Dorsolateral prefrontal cortex (tissue), 120 donors: ENCODE measurements at regions of chr3 and their contacts with region 1.

Region 1: GRCh38 chr3:138347960-138348753 is at the start of gene MRAS:
- DNase-seq: peak; percentile 49 to 82 (median 65)
- H3K4me3 ChIP-seq: peak within 1 kb of the TSS; percentile 55 to 95 (median 81)
- H3K27ac ChIP-seq: peak within 1 kb of the TSS; percentile 22 to 97 (median 92)
- H3K27me3 ChIP-seq: no peaks in the 10 kb centered on the region
- CTCF ChIP-seq: peak in 53 of 56 donors; percentile 24 to 76 (median 53)
- total RNA-seq, gene MRAS: 92.4 to 559 (median 198) TPM

Region 2: GRCh38 chr3:138381950-138382688 is 34.0 kb after region 1 on chr3:
- intact Hi-C with region 1: loop called in 1 of 2 experiments (anchors 2 kb)
- DNase-seq: peak in 5 of 10 donors; percentile 53 to 70 (median 62)
- H3K4me3 ChIP-seq: peak overlapping the region in 8 of 59 donors; percentile 1 to 39 (median 12)
- H3K27ac ChIP-seq: peak overlapping the region; percentile 52 to 99 (median 94)
- H3K27me3 ChIP-seq: no peaks in the 10 kb centered on the region
- CTCF ChIP-seq: peak in 1 of 56 donors; percentile 16

Region 3: GRCh38 chr3:138397983-138398382 is 49.8 kb after region 1 on chr3:
- intact Hi-C with region 1: loop called (anchors 5 kb)
- DNase-seq: peak in 1 of 10 donors; percentile 59
- H3K4me3 ChIP-seq: no peak overlapping the region
- H3K27ac ChIP-seq: peak overlapping the region in 7 of 59 donors; percentile 1 to 70 (median 22)
- H3K27me3 ChIP-seq: no peaks in the 10 kb centered on the region
- CTCF ChIP-seq: peak in 52 of 56 donors; percentile 18 to 72 (median 48)

Region 4: DNA sequence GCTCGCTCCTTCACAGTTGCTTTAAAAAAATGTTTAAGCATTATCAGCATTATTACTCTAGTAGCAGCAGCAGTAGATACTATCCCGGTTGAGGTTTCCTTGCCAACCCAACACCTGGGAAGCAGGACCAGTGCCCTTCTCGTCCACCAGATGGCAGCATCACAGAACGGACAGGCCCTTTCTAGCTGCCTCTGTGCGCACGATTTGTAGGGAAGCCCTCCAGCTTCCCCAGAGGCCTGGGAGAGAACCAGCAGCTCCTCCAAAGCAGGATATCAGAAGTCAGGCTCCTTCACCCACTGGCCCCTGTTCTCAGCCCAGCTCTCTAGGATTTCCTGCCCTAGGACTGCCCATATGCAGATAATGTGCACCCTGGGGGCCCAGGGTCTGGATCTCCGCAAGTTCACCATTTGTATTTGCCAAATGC is 69.4 kb after region 1 on chr3:
- intact Hi-C with region 1: loop called in 1 of 2 experiments (anchors 5 kb)
- DNase-seq: peak; percentile 66 to 85 (median 79)
- H3K4me3 ChIP-seq: no peak overlapping the region
- H3K27ac ChIP-seq: no peak overlapping the region
- H3K27me3 ChIP-seq: no peaks in the 10 kb centered on the region
- CTCF ChIP-seq: peak; percentile 72 to 96 (median 89)

Region 5: DNA sequence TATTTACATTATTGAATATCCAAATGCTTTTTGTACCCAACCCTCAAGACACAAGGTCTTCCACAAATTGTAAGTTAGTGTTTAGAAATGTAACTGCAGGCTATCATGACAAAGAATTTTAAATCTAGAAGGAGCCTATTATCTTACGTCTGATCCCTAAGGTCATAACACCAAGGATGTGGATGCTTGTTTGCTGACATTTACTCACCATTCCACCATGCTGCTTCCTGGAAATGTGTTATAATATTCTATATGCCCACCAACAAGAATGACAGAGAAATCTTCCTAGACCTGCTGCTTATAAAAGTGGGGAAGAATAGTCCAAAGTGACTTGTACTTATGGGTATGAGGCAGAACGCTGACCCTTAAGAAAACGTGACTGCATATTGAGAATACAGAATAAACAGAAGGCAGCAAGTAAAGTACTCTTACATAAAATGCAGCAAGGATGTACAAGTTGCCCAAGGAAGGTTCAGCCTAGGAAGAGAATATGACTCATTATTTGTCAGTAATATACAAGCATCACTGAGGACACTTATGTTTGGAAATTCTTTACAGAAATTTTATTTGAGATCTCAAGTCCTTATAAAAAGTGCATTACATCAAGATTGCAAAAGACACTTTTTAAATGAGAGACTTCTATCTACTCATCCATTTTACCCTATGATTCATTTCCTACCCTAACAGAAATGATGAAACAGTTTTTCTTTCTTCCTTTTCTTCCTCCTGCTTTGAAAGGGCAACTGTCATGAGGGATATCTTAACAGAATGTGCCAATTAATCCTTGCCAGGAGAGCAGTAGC is 145.8 kb after region 1 on chr3:
- intact Hi-C with region 1: no loop called
- DNase-seq: no peak
- H3K4me3 ChIP-seq: no peak overlapping the region
- H3K27ac ChIP-seq: peak overlapping the region in 10 of 59 donors; percentile 6 to 66 (median 30)
- H3K27me3 ChIP-seq: no peaks in the 10 kb centered on the region
- CTCF ChIP-seq: no peak